Activated T-helper 2 cell treated with anti-CD3 and anti-CD28 coated beads, Interferon-gamma antibody, Interleukin-2, Interleukin-4, amounts not matched to agents 10 μg/mL and 5 μg/mL and 100 μg/mL, durations not matched to agents 14 hours and 24 hours and 36 hours (primary cell): ENCODE measurements at regions of chr1 and their contacts with region 1.

Region 1: DNA sequence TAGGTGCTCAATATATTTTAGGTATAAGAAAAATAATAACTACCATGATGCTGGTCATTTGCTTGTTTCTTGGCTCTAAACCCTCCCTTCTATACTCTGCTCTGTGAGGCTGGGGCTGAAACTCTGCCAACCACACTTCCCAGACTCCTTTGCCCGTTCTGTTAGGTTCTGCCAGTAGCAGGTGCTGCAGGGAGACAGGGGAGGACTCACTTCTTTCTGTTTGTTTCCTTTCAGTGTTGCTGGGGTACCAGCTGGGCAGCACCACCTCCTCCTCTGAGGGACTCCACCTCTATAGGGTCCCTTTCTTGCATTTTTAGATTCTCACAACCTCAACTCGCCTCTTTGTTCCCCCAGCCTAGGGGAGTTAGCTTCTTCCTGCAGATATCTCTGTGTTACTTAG is 17.0 kb upstream of the SH2D2A start:
- DNase-seq: no peak
- H3K4me3 Mint-ChIP-seq: no peak overlapping the region
- H3K27ac Mint-ChIP-seq: peak overlapping the region; percentile 50
- H3K4me1 Mint-ChIP-seq: peaks cover 51% of the 10 kb centered on the region
- H3K27me3 Mint-ChIP-seq: peaks cover 3% of the 10 kb centered on the region

Region 2: DNA sequence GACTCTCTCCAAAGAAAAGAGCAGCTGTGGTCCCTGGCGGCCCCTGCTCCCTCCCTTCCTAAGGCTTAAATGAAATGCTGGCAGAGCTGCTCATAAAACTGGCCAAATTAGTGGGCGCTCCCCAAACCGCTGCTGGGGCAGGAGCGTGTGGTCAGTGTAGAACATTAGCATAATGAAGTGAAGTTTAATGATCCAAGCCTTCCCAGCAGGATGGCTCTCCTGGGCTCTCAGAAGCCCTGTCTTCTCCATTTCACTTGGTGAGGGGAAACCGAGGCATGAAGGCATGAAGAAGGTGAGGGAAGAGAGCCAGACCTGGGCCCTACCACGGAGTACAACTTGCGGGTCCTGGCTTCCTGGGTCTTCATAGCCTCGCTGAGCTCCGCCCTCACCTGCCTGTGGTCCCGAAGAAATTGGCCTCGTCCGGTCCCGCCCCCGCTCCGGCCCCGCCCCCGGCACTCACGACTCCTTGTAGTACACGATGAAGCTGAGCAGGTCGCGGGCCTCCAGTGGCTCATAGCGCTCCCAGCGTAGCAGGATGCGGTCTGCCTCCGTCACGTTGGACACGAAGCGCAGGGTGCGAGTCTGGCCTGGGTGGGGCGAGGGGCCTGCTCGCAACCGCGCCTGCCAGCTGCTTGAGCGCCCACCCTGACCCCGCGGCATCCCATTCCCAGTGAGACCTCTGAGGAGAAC is 15.0 kb after region 1 on chr1:
- intact Hi-C with region 1: loop called (anchors 2 kb)
- DNase-seq: peak; percentile 55
- H3K4me3 Mint-ChIP-seq: peak overlapping the region; percentile 4
- H3K27ac Mint-ChIP-seq: no peak overlapping the region
- H3K4me1 Mint-ChIP-seq: peaks cover 22% of the 10 kb centered on the region
- H3K27me3 Mint-ChIP-seq: peaks cover 44% of the 10 kb centered on the region